ENCODE measurements at regions of chr3 and their contacts with region 1.

Region 1: GRCh38 chr3:151168269-151169094 is 34.5 kb downstream of the GPR171 start:
- DNase-seq: peak; percentile 70
- CTCF ChIP-seq: peak; percentile 92

Region 2: DNA sequence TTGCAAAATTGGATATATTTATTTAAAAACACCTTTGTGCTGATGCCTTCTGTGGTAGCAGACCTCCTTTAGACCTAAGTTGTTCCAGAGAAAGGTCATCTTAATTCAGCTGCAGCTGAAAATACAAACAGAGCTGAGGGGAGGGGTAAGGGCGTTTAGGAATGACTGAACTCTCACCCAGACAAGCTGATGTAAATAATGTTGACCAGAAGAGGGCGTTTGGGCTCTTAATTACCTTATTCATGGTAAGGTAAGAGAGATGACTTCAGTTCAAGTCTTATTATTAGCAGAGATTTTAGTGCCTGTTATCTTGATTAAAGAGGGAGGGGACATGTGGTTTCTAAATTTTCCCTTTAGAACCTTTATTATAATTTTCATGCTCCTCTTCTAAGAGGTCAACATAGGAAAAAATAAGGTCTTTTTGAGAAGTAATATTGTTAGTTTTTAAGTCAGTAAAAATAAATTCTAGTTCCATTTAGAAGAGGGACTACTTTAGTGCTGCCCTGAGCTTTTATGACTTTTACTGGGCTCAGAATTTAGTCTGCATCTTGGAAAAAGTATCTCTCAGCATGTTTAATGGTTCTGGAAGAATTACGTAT is 11.8 kb before region 1 on chr3:
- CTCF ChIA-PET with region 1: interaction called, 16 read pairs
- POLR2A ChIA-PET with region 1: no interaction called
- DNase-seq: peak; percentile 60
- CTCF ChIP-seq: peak; percentile 66

Region 3: GRCh38 chr3:151196434-151196833 is 28.0 kb after region 1 on chr3:
- CTCF ChIA-PET with region 1: interaction called, 11 read pairs
- POLR2A ChIA-PET with region 1: no interaction called
- DNase-seq: no peak
- CTCF ChIP-seq: no peak

Region 4: DNA sequence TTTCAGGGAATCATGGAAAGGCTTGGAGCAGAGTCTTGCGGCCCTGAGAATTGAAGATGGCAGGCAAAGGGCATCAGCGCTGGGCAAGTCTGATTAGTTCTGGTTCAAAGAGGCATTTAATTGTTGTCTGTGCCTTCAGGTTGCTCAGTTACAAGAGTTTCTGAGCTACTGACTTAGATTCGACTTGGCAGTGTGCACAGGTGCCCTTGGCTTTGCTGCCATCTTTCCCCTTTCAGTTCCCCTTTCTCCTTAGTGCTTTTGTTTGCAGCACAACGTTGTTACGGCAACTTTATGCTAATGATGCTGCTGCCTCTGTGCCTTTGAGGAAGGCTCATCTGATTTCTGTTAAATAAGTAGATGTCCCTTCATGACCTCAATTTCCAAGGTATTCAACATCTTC is 97.4 kb after region 1 on chr3:
- CTCF ChIA-PET with region 1: interaction called, 16 read pairs
- POLR2A ChIA-PET with region 1: no interaction called
- DNase-seq: peak; percentile 36
- CTCF ChIP-seq: no peak

Region 5: GRCh38 chr3:151293127-151293526 is 124.6 kb after region 1 on chr3:
- CTCF ChIA-PET with region 1: interaction called, 30 read pairs
- POLR2A ChIA-PET with region 1: no interaction called
- DNase-seq: no peak
- CTCF ChIP-seq: no peak

Region 6: GRCh38 chr3:151526757-151527156 is 358.3 kb after region 1 on chr3:
- CTCF ChIA-PET with region 1: no interaction called
- POLR2A ChIA-PET with region 1: no interaction called
- DNase-seq: no peak
- CTCF ChIP-seq: no peak